Endothelial cell of umbilical vein (primary cell): ENCODE measurements at regions of chr11 and their contacts with region 1.

Region 1: DNA sequence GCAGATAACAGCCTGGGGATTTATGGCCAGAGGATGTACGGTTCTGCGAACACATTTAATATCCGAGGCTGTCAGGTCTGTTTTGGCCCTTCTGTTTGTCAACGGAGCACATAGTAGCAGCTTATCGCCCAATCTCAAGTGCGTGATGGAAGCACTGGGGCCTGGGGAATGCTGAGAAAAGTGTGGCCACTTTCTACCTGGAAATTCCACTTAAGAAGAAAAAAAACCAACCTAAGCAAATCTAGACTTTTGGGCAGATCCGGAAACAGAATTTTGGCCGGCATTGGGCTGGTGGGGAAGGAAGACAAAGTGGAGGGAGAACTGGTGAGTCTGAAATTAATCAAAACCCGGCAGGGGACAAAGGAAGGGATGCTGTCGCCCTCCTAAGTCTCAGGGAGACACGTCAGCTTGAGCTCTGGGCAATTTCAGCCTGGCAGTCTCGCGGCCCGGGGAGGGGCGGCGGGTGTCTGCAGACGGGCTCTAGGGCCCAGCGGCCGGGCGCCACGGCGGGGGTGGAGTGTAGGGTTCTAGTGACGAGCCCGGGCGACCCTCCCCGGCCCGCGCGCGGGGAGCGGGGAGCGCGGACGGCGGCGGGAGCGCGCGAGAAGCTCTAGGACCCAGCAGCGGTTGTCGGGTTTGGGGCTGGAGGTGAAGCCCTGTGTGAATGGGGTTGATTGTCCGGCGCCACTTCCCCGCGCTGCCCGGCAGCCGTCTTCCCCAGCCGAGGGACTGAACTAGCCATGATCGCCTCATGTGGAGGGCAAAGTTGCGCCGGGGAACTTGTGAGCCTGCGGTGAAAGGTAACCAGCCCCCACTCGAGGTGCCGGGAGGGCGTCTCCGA is at the start of gene AMOTL1:
- DNase-seq: peak; percentile 85
- H3K4me3 ChIP-seq: peak within 1 kb of the TSS; percentile 55 to 76 (median 73)
- H3K27ac ChIP-seq: peak within 1 kb of the TSS; percentile 85
- H3K4me1 ChIP-seq: peaks cover 19% of the 10 kb centered on the region
- H3K27me3 ChIP-seq: no peaks in the 10 kb centered on the region
- CTCF ChIP-seq: no peak
- POLR2A ChIP-seq: peak; percentile 77
- total RNA-seq, gene AMOTL1: 37.8 and 41.8 TPM in 2 replicates

Region 2: DNA sequence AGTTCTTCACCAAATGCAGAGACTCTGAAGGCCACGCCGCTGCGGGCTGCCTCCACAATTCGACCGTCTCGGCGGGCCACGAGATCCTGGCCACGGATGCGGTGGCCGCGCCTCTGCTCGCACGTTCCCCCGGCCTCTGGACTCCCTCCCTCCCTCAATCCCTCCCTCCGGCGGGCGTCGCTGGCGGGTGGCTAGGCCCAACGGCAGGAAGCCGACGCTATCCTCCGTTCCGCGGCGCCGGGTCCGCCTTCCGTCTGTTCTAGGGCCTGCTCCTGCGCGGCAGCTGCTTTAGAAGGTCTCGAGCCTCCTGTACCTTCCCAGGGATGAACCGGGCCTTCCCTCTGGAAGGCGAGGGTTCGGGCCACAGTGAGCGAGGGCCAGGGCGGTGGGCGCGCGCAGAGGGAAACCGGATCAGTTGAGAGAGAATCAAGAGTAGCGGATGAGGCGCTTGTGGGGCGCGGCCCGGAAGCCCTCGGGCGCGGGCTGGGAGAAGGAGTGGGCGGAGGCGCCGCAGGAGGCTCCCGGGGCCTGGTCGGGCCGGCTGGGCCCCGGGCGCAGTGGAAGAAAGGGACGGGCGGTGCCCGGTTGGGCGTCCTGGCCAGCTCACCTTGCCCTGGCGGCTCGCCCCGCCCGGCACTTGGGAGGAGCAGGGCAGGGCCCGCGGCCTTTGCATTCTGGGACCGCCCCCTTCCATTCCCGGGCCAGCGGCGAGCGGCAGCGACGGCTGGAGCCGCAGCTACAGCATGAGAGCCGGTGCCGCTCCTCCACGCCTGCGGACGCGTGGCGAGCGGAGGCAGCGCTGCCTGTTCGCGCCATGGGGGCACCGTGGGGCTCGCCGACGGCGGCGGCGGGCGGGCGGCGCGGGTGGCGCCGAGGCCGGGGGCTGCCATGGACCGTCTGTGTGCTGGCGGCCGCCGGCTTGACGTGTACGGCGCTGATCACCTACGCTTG is 224.0 kb before region 1 on chr11 and contains the start of gene FUT4:
- CTCF ChIA-PET with region 1: no interaction called
- POLR2A ChIA-PET with region 1: no interaction called
- dilution Hi-C with region 1: no loop called
- intact Hi-C with region 1: loop called (anchors 10 kb)
- DNase-seq: peak; percentile 80
- H3K4me3 ChIP-seq: peak within 1 kb of the TSS; percentile 11 to 57 (median 41)
- H3K27ac ChIP-seq: peak within 1 kb of the TSS; percentile 55
- H3K4me1 ChIP-seq: peaks cover 12% of the 10 kb centered on the region
- H3K27me3 ChIP-seq: peaks cover 4 to 9% of the 10 kb centered on the region in 2 experiments
- CTCF ChIP-seq: no peak
- POLR2A ChIP-seq: peak; percentile 76
- total RNA-seq, gene FUT4: 4.4 and 5.3 TPM in 2 replicates

Region 3: GRCh38 chr11:94731880-94732601 is 35.9 kb before region 1 on chr11:
- CTCF ChIA-PET with region 1: no interaction called
- POLR2A ChIA-PET with region 1: no interaction called
- dilution Hi-C with region 1: no loop called
- intact Hi-C with region 1: loop called (anchors 2 kb)
- DNase-seq: peak; percentile 38
- H3K4me3 ChIP-seq: no peak overlapping the region
- H3K27ac ChIP-seq: peak overlapping the region; percentile 79
- H3K4me1 ChIP-seq: peaks cover 35% of the 10 kb centered on the region
- H3K27me3 ChIP-seq: no peaks in the 10 kb centered on the region
- CTCF ChIP-seq: no peak
- POLR2A ChIP-seq: no peak

Region 4: GRCh38 chr11:94741022-94741679 is 26.8 kb before region 1 on chr11:
- CTCF ChIA-PET with region 1: interaction called, 28 read pairs
- POLR2A ChIA-PET with region 1: no interaction called
- dilution Hi-C with region 1: no loop called
- intact Hi-C with region 1: loop called (anchors 1 kb)
- DNase-seq: peak; percentile 73
- H3K4me3 ChIP-seq: peak overlapping the region; percentile 52 to 71 (median 63)
- H3K27ac ChIP-seq: no peak overlapping the region
- H3K4me1 ChIP-seq: peaks cover 22% of the 10 kb centered on the region
- H3K27me3 ChIP-seq: no peaks in the 10 kb centered on the region
- CTCF ChIP-seq: peak; percentile 30 to 42
- POLR2A ChIP-seq: no peak

Region 5: DNA sequence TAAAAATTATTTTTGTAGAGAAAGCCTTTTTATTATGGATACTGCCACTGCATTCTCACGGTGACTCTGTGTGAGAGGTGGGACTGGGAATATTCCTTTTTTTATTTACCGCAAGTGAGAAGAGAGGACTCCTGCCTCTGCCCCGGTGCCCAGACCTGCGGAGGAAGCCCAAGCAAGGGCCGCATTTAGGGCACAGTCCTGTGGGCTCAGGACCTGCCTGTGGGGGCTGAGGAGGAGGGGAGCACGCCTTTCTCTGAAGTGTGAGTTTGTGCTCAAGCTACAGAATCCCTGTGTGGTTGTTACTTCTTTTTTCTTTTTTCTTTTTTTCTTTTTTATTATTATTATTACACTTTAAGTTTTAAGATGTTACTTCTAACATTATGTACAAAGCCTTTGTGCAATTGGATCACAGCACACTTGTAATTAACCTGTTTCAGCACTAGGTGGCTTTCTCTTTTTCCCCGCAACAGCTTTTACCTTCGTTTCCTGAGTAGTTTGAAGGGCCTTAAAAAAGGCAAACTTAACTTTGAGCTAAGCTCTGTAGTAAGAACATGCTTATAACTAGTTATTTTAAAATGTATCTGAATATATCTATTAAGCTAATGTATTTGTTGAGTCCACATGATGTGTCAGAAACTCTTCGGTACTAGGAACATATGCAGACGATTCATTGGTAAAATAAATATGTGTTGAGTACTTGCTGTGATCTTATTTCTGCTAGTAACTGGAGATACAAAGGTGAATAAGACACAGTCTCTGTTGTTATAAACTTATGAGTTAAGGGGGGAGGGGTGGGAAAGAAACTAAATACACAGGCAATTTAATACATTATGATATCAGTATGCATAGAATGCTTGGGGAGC is 18.5 kb after region 1 on chr11:
- CTCF ChIA-PET with region 1: interaction called, 23 read pairs
- POLR2A ChIA-PET with region 1: no interaction called
- dilution Hi-C with region 1: no loop called
- intact Hi-C with region 1: no loop called
- DNase-seq: peak; percentile 63
- H3K4me3 ChIP-seq: no peak overlapping the region
- H3K27ac ChIP-seq: no peak overlapping the region
- H3K4me1 ChIP-seq: peaks cover 20% of the 10 kb centered on the region
- H3K27me3 ChIP-seq: no peaks in the 10 kb centered on the region
- CTCF ChIP-seq: peak; percentile 36 to 57
- POLR2A ChIP-seq: no peak

Region 6: DNA sequence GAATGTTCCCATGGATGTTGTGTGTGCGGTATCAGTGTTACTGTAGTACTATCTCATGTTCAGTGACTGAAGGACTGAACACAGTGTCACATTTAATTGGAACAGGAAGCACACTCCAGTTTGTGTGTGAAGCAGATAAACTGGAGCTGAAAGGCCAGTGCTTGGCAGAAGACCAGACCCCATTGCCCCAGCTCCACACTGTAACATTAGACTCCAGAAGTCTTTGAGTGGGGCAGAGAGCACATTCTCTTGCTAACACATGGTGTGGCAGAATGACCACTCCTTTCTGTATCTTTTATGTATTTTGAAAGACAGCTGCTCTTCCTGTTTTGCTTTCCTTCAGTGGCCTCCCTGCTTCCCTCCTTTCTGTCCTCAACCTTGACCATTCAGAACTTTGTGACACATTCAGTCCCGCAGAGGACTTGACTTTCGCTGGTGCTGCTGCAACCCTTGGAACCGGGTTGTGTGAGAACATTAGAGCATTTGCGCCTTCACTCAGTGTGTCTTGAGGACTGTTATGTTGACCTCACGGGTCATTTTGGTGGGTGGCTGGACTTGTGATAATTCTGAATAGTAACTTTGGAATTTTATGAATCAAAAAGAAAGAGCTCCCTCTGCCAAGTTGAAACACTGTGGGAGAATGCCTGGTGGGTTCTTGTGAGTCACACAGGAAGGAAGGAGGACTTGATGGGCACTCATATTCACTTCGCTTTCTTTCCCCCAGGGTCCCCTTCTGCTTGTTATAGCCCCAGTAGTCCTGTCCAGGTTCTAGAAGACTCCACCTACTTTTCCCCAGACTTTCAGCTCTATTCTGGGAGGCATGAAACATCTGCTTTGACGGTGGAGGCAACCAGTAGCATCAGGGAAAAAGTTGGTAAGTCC is 26.5 kb after region 1 on chr11:
- CTCF ChIA-PET with region 1: interaction called, 12 read pairs
- POLR2A ChIA-PET with region 1: interaction called, 5 read pairs
- dilution Hi-C with region 1: no loop called
- intact Hi-C with region 1: loop called (anchors 1 kb)
- DNase-seq: peak; percentile 93
- H3K4me3 ChIP-seq: peak overlapping the region in 2 of 3 experiments; percentile 4 to 15
- H3K27ac ChIP-seq: peak overlapping the region; percentile 90
- H3K4me1 ChIP-seq: peaks cover 44% of the 10 kb centered on the region
- H3K27me3 ChIP-seq: no peaks in the 10 kb centered on the region
- CTCF ChIP-seq: no peak
- POLR2A ChIP-seq: no peak

Region 7: GRCh38 chr11:94876645-94877442 is 108.9 kb after region 1 on chr11:
- CTCF ChIA-PET with region 1: no interaction called
- POLR2A ChIA-PET with region 1: no interaction called
- dilution Hi-C with region 1: no loop called
- intact Hi-C with region 1: loop called (anchors 1 kb)
- DNase-seq: peak; percentile 94
- H3K4me3 ChIP-seq: no peak overlapping the region
- H3K27ac ChIP-seq: peak overlapping the region; percentile 75
- H3K4me1 ChIP-seq: peaks cover 14% of the 10 kb centered on the region
- H3K27me3 ChIP-seq: no peaks in the 10 kb centered on the region
- CTCF ChIP-seq: peak; percentile 28 to 32
- POLR2A ChIP-seq: no peak